HCT116 (cell line): ENCODE measurements at regions of chr10 and their contacts with region 1.

Region 1: DNA sequence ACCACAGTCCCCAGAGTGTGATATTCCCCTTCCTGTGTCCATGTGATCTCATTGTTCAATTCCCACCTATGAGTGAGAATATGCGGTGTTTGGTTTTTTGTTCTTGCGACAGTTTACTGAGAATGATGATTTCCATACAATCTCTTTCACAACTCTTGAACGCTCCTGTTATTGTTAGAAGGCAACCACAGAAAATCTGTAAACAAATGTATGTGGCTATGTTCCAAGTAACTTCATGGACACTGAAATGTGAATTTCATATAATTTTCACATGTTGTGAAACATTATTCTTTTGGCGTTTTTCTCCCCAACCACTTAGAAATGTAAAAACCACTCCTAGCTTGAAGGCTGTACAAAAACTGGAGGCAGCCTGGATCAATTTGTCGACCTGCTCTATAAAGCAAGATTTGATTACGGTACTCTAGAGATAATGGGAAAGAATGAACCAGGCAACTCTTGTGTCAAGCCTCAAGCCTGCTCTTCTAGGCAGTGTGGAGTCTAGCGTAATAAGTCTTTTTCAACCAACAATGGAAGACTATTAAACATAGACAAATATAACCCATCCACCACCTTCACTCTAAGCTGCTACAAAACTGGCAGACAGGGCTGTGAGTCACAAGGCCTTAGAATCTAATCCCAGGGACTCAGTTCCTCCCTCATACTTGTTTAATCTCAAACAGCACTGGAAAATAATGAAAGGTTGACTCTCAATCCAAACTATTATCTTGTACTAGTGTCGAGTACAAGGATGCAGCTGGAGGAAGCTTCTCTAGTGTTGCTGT is 22.7 kb downstream of the ARL3 start:
- DNase-seq: no peak
- ATAC-seq: no peak
- H3K4me3 ChIP-seq: no peak overlapping the region
- H3K27ac ChIP-seq: no peak overlapping the region
- H3K4me1 ChIP-seq: no peaks in the 10 kb centered on the region
- H3K27me3 ChIP-seq: no peaks in the 10 kb centered on the region
- CTCF ChIP-seq: no peak
- POLR2A ChIP-seq: no peak
- RAD21 ChIP-seq: no peak

Region 2: GRCh38 chr10:102678842-102679289 is 12.6 kb before region 1 on chr10:
- CTCF ChIA-PET with region 1: interaction called, 11 read pairs
- POLR2A ChIA-PET with region 1: no interaction called
- RAD21 ChIA-PET with region 1: no interaction called
- intact Hi-C with region 1: no loop called
- DNase-seq: no peak
- ATAC-seq: peak; percentile 98
- H3K4me3 ChIP-seq: no peak overlapping the region
- H3K27ac ChIP-seq: no peak overlapping the region
- H3K4me1 ChIP-seq: peaks cover 3 to 10% of the 10 kb centered on the region in 2 experiments; a peak in 3 of 4 replicates
- H3K27me3 ChIP-seq: no peaks in the 10 kb centered on the region
- CTCF ChIP-seq: peak; percentile 62 to 98 (median 95); a peak in 5 of 6 replicates
- POLR2A ChIP-seq: no peak
- RAD21 ChIP-seq: peak; percentile 75